Naive thymus-derived CD4-positive, alpha-beta T cell (primary cell): ENCODE measurements at regions of chr1 and their contacts with region 1.

Region 1: DNA sequence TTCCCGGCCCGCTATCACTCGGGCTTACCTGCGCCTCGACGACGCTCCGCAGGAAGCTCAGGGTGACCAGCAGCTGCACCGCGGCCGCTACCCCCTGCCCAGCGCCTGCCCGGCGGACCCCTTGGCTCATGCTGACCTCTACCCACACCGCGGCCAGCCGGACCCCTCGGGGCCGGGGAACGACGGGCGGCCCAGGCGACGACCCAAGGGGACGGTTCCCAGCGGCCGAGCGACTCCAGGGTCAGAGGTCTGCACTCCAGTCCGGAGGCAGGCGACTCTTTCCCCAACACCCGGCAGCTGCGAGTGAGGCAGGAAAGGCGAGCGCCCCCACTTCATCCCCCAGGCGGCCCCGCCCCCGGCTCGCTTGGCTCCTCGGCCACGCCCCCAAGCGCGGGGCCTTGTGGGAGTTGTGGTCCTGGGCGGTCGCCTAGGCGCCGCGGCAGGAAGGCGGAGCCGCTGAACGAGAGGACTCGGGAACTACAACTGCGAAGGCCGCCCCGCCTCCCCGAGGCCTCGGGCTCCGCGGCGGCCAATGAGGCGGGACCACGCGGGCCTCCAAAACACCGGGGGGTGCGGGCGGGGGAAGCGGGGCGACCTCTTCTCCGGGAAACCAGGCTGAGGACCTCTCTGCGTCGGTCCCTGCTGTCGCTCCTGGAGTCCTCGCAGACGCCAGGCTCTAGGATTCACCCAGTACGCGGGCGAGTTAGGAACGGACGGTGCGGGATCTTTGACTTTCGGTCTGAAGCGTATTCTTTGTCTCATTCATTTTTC is at the start of gene ERO1B:
- DNase-seq: peak; percentile 95 to 99 (median 97)
- ATAC-seq: peak; percentile 98
- H3K4me3 ChIP-seq: peak within 1 kb of the TSS; percentile 83
- H3K4me3 Mint-ChIP-seq: peak within 1 kb of the TSS; percentile 80 to 97 (median 94)
- H3K27ac ChIP-seq: peak within 1 kb of the TSS; percentile 82
- H3K27ac Mint-ChIP-seq: peak within 1 kb of the TSS; percentile 80 to 96 (median 95)
- H3K4me1 ChIP-seq: peaks cover 7 to 34% of the 10 kb centered on the region in 2 donors
- H3K4me1 Mint-ChIP-seq: peaks cover 29 to 82% (median 57%) of the 10 kb centered on the region in 7 donors
- H3K27me3 ChIP-seq: no peaks in the 10 kb centered on the region
- H3K27me3 Mint-ChIP-seq: peaks cover 0 to 10% (median 0%) of the 10 kb centered on the region in 5 donors
- total RNA-seq, gene ERO1B: 5.0 to 26.8 (median 16.0) TPM

Region 2: DNA sequence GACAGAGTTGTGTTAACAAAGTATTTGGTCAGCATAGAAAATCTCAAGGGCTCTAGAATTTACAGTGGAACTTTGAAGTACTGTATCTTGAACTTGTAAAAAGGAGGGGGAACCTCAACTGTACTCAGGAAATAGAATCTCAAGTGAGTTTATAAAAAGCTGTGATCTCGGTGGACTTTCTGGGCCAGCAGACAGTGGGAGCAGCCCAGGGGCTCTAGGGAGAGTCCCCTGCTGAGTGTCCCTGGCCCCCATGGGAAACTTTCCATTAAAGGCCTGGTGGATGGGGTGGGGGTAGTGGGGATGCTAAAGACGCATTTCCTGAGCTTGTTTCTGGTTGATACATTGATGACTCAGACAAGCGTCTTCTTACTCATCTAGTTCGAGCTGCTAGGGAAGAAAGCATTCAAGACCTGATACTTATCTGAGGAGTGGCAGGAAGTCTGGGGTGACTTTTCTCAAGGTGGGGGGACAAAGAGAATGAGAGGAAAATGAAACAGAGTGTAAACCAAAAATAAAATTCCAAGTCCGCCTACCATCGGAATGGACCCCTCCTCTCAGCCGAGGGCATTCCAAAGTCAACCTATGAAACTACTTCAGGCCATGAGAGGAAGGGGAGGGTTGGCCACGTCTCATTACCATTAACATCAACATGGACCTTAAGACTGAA is 282.4 kb before region 1 on chr1:
- CTCF ChIA-PET with region 1: no interaction called
- POLR2A ChIA-PET with region 1: no interaction called
- intact Hi-C with region 1: loop called (anchors 5 kb)
- DNase-seq: peak in 8 of 9 donors; percentile 7 to 75 (median 37)
- ATAC-seq: peak; percentile 90
- H3K4me3 ChIP-seq: no peak overlapping the region
- H3K4me3 Mint-ChIP-seq: peak overlapping the region in 9 of 10 donors; percentile 0 to 71 (median 55)
- H3K27ac ChIP-seq: peak overlapping the region; percentile 22
- H3K27ac Mint-ChIP-seq: peak overlapping the region; percentile 19 to 97 (median 80)
- H3K4me1 ChIP-seq: peaks cover 10 to 31% of the 10 kb centered on the region in 2 donors
- H3K4me1 Mint-ChIP-seq: peaks cover 10 to 71% (median 20%) of the 10 kb centered on the region in 7 donors
- H3K27me3 ChIP-seq: no peaks in the 10 kb centered on the region
- H3K27me3 Mint-ChIP-seq: no peaks in the 10 kb centered on the region

Region 3: GRCh38 chr1:236099355-236099974 is 182.4 kb before region 1 on chr1:
- CTCF ChIA-PET with region 1: no interaction called
- POLR2A ChIA-PET with region 1: no interaction called
- intact Hi-C with region 1: no loop called
- DNase-seq: no peak
- ATAC-seq: no peak
- H3K4me3 ChIP-seq: no peak overlapping the region
- H3K4me3 Mint-ChIP-seq: no peak overlapping the region
- H3K27ac ChIP-seq: no peak overlapping the region
- H3K27ac Mint-ChIP-seq: no peak overlapping the region
- H3K4me1 ChIP-seq: no peaks in the 10 kb centered on the region
- H3K4me1 Mint-ChIP-seq: peaks cover 0 to 4% (median 3%) of the 10 kb centered on the region in 7 donors
- H3K27me3 ChIP-seq: no peaks in the 10 kb centered on the region
- H3K27me3 Mint-ChIP-seq: peaks cover 5 to 19% (median 13%) of the 10 kb centered on the region in 5 donors

Region 4: DNA sequence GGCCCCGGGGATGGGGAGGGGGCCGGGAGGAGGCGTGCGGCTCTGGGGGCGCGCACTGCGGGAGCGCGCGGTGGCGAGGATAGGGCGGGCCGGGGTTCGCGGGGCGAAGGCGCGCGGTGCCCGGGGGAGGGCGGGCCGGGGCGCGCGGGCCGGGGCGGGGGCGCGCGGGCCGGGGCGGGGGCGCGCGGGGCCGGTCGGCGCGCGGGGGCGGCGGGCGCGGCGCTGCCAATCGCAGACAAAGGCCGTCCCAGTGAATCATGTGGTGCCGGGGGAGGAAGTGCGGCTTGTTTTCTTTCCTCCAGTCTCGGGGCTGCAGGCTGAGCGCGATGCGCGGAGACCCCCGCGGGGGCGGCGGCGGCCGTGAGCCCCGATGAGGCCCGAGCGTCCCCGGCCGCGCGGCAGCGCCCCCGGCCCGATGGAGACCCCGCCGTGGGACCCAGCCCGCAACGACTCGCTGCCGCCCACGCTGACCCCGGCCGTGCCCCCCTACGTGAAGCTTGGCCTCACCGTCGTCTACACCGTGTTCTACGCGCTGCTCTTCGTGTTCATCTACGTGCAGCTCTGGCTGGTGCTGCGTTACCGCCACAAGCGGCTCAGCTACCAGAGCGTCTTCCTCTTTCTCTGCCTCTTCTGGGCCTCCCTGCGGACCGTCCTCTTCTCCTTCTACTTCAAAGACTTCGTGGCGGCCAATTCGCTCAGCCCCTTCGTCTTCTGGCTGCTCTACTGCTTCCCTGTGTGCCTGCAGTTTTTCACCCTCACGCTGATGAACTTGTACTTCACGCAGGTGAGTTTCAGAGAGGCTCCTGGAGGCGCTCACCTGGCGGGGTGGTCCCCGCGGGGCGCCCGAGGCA is 139.4 kb before region 1 on chr1 and contains the start of gene GPR137B:
- CTCF ChIA-PET with region 1: no interaction called
- POLR2A ChIA-PET with region 1: interaction called, 3 read pairs
- intact Hi-C with region 1: loop called (anchors 1 kb)
- DNase-seq: peak; percentile 17 to 74 (median 37)
- ATAC-seq: peak; percentile 79
- H3K4me3 ChIP-seq: peak within 1 kb of the TSS; percentile 91
- H3K4me3 Mint-ChIP-seq: peak within 1 kb of the TSS; percentile 87 to 99 (median 97)
- H3K27ac ChIP-seq: peak within 1 kb of the TSS; percentile 7
- H3K27ac Mint-ChIP-seq: peak within 1 kb of the TSS in 6 of 9 donors; percentile 52 to 90 (median 76)
- H3K4me1 ChIP-seq: peaks cover 12 to 15% of the 10 kb centered on the region in 2 donors
- H3K4me1 Mint-ChIP-seq: peaks cover 33 to 53% (median 38%) of the 10 kb centered on the region in 7 donors
- H3K27me3 ChIP-seq: no peaks in the 10 kb centered on the region
- H3K27me3 Mint-ChIP-seq: peaks cover 13 to 47% (median 16%) of the 10 kb centered on the region in 5 donors
- total RNA-seq, gene GPR137B: 6.4 to 15.3 (median 7.0) TPM

Region 5: DNA sequence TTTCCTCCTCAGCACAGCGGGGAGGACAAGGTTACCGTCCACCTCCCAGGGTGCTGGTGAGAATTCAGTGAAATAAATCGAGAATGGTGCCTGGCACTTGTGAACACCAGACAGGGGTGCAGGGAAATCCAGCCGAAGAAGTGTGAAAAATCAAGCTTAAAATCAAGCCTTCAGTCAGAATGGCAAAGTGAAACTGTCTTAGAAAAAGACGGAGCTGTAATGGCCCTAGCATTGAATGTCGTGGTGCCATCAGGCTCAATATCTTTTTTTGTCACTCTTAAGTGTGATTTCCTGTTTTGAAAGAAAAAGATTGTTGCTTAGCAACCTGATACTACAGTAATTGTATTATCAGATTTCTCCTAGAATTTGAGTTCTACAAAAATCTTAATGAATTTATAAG is 134.3 kb after region 1 on chr1:
- CTCF ChIA-PET with region 1: no interaction called
- POLR2A ChIA-PET with region 1: no interaction called
- intact Hi-C with region 1: loop called in 1 of 2 experiments (anchors 2 kb)
- DNase-seq: peak in 8 of 9 donors; percentile 13 to 75 (median 55)
- ATAC-seq: peak; percentile 94
- H3K4me3 ChIP-seq: peak overlapping the region; percentile 41
- H3K4me3 Mint-ChIP-seq: peak overlapping the region; percentile 13 to 77 (median 62)
- H3K27ac ChIP-seq: peak overlapping the region; percentile 52
- H3K27ac Mint-ChIP-seq: peak overlapping the region; percentile 73 to 95 (median 81)
- H3K4me1 ChIP-seq: peaks cover 11 to 26% of the 10 kb centered on the region in 2 donors
- H3K4me1 Mint-ChIP-seq: peaks cover 8 to 17% (median 10%) of the 10 kb centered on the region in 7 donors
- H3K27me3 ChIP-seq: no peaks in the 10 kb centered on the region
- H3K27me3 Mint-ChIP-seq: no peaks in the 10 kb centered on the region

Region 6: GRCh38 chr1:236795035-236795756 is 513.4 kb after region 1 on chr1 and contains the start of gene MTR:
- CTCF ChIA-PET with region 1: no interaction called
- POLR2A ChIA-PET with region 1: interaction called, 4 read pairs
- intact Hi-C with region 1: loop called (anchors 1 kb)
- DNase-seq: peak; percentile 84 to 97 (median 96)
- ATAC-seq: peak; percentile 95
- H3K4me3 ChIP-seq: peak within 1 kb of the TSS; percentile 61
- H3K4me3 Mint-ChIP-seq: peak within 1 kb of the TSS; percentile 87 to 99 (median 95)
- H3K27ac ChIP-seq: peak within 1 kb of the TSS; percentile 98
- H3K27ac Mint-ChIP-seq: peak within 1 kb of the TSS; percentile 93 to 100 (median 97)
- H3K4me1 ChIP-seq: peaks cover 13 to 14% of the 10 kb centered on the region in 2 donors
- H3K4me1 Mint-ChIP-seq: peaks cover 14 to 49% (median 41%) of the 10 kb centered on the region in 7 donors
- H3K27me3 ChIP-seq: no peaks in the 10 kb centered on the region
- H3K27me3 Mint-ChIP-seq: peaks cover 0 to 13% (median 0%) of the 10 kb centered on the region in 5 donors
- total RNA-seq, gene MTR: 42.9 to 78.8 (median 49.4) TPM